ENCODE measurements at regions of chr11 and their contacts with region 1.

Region 1: GRCh38 chr11:129695575-129696308 is 119.9 kb upstream of the TMEM45B start:
- DNase-seq: peak; percentile 39 to 75 (median 56)
- ATAC-seq: peak; percentile 94
- H3K4me3 ChIP-seq: peak overlapping the region; percentile 56
- H3K4me3 Mint-ChIP-seq: peak overlapping the region; percentile 81
- H3K27ac ChIP-seq: no peak overlapping the region
- H3K27ac Mint-ChIP-seq: no peak overlapping the region
- H3K4me1 ChIP-seq: peaks cover 10% of the 10 kb centered on the region
- H3K4me1 Mint-ChIP-seq: peaks cover 8% of the 10 kb centered on the region
- H3K27me3 ChIP-seq: no peaks in the 10 kb centered on the region
- H3K27me3 Mint-ChIP-seq: peaks cover 35% of the 10 kb centered on the region
- CTCF ChIP-seq: peak; percentile 59

Region 2: GRCh38 chr11:129117595-129118350 is 578.0 kb before region 1 on chr11:
- CTCF ChIA-PET with region 1: no interaction called
- POLR2A ChIA-PET with region 1: no interaction called
- intact Hi-C with region 1: loop called (anchors 1 to 2 kb)
- DNase-seq: peak in 12 of 14 experiments; percentile 12 to 76 (median 26)
- ATAC-seq: no peak
- H3K4me3 ChIP-seq: no peak overlapping the region
- H3K4me3 Mint-ChIP-seq: no peak overlapping the region
- H3K27ac ChIP-seq: no peak overlapping the region
- H3K27ac Mint-ChIP-seq: no peak overlapping the region
- H3K4me1 ChIP-seq: no peaks in the 10 kb centered on the region
- H3K4me1 Mint-ChIP-seq: no peaks in the 10 kb centered on the region
- H3K27me3 ChIP-seq: no peaks in the 10 kb centered on the region
- H3K27me3 Mint-ChIP-seq: no peaks in the 10 kb centered on the region
- CTCF ChIP-seq: peak; percentile 83

Region 3: GRCh38 chr11:129230006-129230405 is 465.7 kb before region 1 on chr11:
- CTCF ChIA-PET with region 1: no interaction called
- POLR2A ChIA-PET with region 1: no interaction called
- intact Hi-C with region 1: loop called (anchors 5 kb)
- DNase-seq: peak in 3 of 14 experiments; percentile 13 to 26 (median 19)
- ATAC-seq: no peak
- H3K4me3 ChIP-seq: no peak overlapping the region
- H3K4me3 Mint-ChIP-seq: no peak overlapping the region
- H3K27ac ChIP-seq: no peak overlapping the region
- H3K27ac Mint-ChIP-seq: no peak overlapping the region
- H3K4me1 ChIP-seq: no peaks in the 10 kb centered on the region
- H3K4me1 Mint-ChIP-seq: no peaks in the 10 kb centered on the region
- H3K27me3 ChIP-seq: no peaks in the 10 kb centered on the region
- H3K27me3 Mint-ChIP-seq: no peaks in the 10 kb centered on the region
- CTCF ChIP-seq: peak; percentile 28

Region 4: DNA sequence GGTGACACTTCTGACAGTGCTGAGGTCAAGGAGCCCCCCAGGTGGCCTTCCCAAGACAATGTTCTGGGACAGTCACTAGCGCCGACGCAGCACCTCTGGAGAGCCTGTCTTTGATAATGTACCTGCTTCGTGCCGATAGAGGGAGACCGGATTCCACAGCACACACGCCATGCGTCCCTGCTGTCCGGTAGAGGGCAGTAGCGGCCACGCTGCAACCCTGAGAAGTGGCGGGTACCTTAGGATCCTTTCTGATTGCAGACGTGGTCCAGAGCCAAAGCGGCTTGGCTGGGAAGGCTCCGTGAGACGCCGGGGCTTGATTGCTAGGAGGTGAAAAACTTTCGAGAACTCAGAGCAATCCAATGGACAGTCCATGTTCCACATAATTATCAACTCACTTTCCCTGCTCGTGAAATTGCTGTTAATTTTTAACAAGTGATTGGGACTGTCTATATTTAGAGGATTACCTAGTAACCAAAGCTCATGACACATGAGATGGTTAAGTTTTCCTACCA is 331.5 kb before region 1 on chr11:
- CTCF ChIA-PET with region 1: no interaction called
- POLR2A ChIA-PET with region 1: no interaction called
- intact Hi-C with region 1: loop called (anchors 1 to 2 kb)
- DNase-seq: peak; percentile 62 to 85 (median 70)
- ATAC-seq: peak; percentile 99
- H3K4me3 ChIP-seq: no peak overlapping the region
- H3K4me3 Mint-ChIP-seq: no peak overlapping the region
- H3K27ac ChIP-seq: no peak overlapping the region
- H3K27ac Mint-ChIP-seq: no peak overlapping the region
- H3K4me1 ChIP-seq: peaks cover 5% of the 10 kb centered on the region
- H3K4me1 Mint-ChIP-seq: no peaks in the 10 kb centered on the region
- H3K27me3 ChIP-seq: peaks cover 13 to 60% of the 10 kb centered on the region in 2 experiments
- H3K27me3 Mint-ChIP-seq: peaks cover 40% of the 10 kb centered on the region
- CTCF ChIP-seq: peak; percentile 99

Region 5: GRCh38 chr11:129508163-129508562 is 187.6 kb before region 1 on chr11:
- CTCF ChIA-PET with region 1: no interaction called
- POLR2A ChIA-PET with region 1: no interaction called
- intact Hi-C with region 1: no loop called
- DNase-seq: no peak
- ATAC-seq: no peak
- H3K4me3 ChIP-seq: no peak overlapping the region
- H3K4me3 Mint-ChIP-seq: no peak overlapping the region
- H3K27ac ChIP-seq: no peak overlapping the region
- H3K27ac Mint-ChIP-seq: no peak overlapping the region
- H3K4me1 ChIP-seq: no peaks in the 10 kb centered on the region
- H3K4me1 Mint-ChIP-seq: no peaks in the 10 kb centered on the region
- H3K27me3 ChIP-seq: no peaks in the 10 kb centered on the region
- H3K27me3 Mint-ChIP-seq: no peaks in the 10 kb centered on the region
- CTCF ChIP-seq: no peak

Region 6: DNA sequence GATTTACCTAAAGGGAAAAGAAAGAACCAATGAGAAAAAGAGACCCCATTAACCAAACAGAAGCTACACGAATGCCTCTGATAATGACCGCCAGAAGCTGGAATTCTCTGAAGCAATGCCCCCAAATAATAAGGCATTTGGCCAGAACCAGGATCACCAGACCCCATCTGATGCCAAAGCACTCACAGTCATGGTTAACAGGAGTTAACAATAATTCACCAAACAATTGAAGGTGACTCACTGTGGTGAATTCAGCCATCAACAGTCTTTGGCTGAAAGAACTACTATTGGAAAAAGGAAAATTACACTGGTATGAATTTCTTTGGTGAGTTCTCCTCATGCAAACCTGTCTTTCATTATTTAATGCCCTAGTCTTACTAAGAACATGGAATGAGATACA is 221.5 kb after region 1 on chr11:
- CTCF ChIA-PET with region 1: no interaction called
- POLR2A ChIA-PET with region 1: no interaction called
- intact Hi-C with region 1: no loop called
- DNase-seq: no peak
- ATAC-seq: no peak
- H3K4me3 ChIP-seq: no peak overlapping the region
- H3K4me3 Mint-ChIP-seq: no peak overlapping the region
- H3K27ac ChIP-seq: no peak overlapping the region
- H3K27ac Mint-ChIP-seq: no peak overlapping the region
- H3K4me1 ChIP-seq: no peaks in the 10 kb centered on the region
- H3K4me1 Mint-ChIP-seq: no peaks in the 10 kb centered on the region
- H3K27me3 ChIP-seq: no peaks in the 10 kb centered on the region
- H3K27me3 Mint-ChIP-seq: no peaks in the 10 kb centered on the region
- CTCF ChIP-seq: no peak